Uterus (tissue), 4 donors: ENCODE measurements at regions of chr12 and their contacts with region 1.

Region 1: DNA sequence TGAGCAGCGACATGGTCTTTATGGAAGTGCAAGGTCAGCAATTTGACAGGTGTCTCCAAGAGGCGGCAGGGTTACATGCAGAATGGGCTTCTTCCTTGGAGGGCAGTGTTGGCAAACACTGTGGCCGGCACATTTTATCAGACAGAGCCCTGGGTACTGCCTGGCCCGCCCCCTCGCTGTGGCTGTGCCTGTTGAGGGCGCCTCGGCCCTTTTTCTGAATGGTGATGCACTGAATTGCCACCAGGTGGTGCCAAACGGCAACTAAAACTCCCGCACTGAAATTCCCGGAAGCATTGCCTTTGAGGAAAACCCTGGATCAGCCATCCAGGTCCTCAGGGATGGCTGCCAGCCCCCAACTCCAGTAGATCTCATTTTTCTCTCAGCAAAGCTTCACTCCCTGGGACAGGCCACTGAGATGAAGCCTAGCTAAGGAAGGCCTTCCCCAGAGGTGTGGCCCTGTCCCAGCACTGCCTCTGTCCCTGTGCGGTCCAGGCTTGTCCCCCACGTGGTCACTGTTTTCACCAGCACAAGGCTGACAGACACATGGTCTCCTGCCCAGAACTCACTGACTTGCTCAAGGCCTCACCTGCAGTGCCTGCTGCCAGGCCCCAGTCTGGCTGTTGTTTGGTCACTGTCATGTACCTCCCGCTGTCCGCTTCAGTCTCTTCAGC is 73.6 kb downstream of the TESC start:
- DNase-seq: peak; percentile 49 to 66
- H3K4me3 ChIP-seq: no peak overlapping the region
- H3K27ac ChIP-seq: no peak overlapping the region
- H3K4me1 ChIP-seq: no peaks in the 10 kb centered on the region
- H3K27me3 ChIP-seq: no peaks in the 10 kb centered on the region
- CTCF ChIP-seq: peak; percentile 79 to 89 (median 88)
- POLR2A ChIP-seq: no peak

Region 2: DNA sequence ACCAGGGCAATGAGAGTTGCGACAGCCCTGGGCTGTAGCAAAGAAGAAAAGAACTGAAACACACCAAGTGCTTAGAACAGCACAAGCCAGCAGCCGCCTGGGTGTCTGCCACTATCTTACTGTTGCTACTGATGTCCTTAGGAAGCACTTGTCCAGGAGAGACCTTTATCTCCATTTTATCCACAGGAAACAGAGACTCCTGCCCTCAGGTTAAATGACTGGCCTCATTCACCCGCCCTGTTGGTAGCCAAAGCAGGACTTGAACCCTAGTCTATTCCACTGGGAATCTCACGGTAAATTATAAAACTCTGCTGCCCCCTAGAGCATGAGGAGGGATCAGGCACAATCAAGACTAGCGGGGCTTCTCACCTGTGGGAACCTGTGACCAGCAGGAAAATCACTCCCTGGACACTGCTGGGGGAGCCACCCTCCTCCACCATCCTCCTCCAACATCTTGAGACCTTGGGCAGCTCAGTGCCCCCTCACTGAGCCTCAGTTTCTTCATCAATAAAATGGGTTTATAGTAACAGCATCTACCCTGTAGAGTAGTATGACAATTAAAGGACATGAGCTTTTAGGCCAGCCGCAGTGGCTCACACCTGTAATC is 94.1 kb after region 1 on chr12:
- intact Hi-C with region 1: loop called (anchors 10 kb)
- DNase-seq: no peak
- H3K4me3 ChIP-seq: no peak overlapping the region
- H3K27ac ChIP-seq: no peak overlapping the region
- H3K4me1 ChIP-seq: no peaks in the 10 kb centered on the region
- H3K27me3 ChIP-seq: no peaks in the 10 kb centered on the region
- CTCF ChIP-seq: peak; percentile 38 to 57 (median 46)
- POLR2A ChIP-seq: no peak